ENCODE measurements at regions of chr10 and their contacts with region 1.

Region 1: DNA sequence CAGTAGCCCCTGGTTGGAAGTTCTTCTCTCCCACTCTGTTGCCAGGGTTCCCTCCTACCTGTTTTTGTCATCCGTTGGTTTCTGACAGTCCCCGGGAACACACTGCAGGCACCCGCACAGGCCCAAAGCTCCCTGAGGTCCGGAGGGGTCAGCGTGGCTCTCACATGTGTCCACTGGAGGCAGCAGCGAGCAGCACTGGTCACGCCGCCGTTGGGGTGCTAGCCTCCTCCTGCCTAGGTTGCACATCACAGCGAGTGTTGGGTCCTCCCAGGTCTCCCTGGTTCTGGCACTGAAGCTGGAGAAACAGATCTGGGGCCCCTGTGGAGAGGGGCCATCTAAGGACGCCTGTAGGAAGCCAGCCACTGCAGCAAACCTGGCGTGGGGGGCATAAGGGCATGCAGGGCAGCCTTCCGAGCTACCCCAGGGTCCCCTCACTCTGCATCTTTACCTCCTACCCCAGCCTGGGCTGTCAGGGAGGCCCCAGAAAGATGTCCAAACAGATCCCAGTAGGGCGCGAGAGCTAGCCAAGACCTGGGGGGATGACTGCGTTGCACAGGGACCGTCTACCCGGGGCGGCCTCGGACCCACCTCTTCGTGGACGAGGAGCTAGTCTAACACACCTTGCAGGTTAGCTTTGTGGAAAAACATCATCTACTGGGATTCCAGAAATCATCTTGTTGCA is 28.9 kb downstream of the LRRC27 start:
- DNase-seq: peak; percentile 26
- H3K27ac ChIP-seq: no peak overlapping the region
- CTCF ChIP-seq: peak; percentile 67

Region 2: DNA sequence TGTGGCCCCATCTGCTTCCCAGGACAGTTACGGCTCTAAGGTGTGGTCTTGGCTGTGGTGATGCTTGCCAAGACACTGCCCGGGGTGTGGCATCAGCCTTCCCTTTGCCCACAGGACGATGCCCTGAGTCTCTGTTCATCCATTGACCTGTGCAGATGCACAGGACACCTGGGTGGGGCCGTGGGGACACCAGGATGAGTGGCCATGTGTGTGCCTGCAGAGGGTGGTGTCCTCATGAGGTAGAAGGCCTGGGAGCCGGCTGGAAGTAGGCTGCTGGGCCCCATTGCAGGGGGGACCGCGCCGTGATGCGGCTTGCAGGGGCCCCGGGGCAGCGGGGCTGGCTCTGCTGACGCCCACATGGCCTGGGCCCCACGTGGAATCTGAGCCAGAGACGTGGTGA is 13.7 kb after region 1 on chr10:
- CTCF ChIA-PET with region 1: interaction called, 10 read pairs
- POLR2A ChIA-PET with region 1: no interaction called
- DNase-seq: no peak
- H3K27ac ChIP-seq: no peak overlapping the region
- CTCF ChIP-seq: no peak

Region 3: GRCh38 chr10:132399107-132400012 is 38.5 kb after region 1 on chr10:
- CTCF ChIA-PET with region 1: no interaction called
- POLR2A ChIA-PET with region 1: no interaction called
- DNase-seq: no peak
- H3K27ac ChIP-seq: peak overlapping the region; percentile 81
- CTCF ChIP-seq: no peak

Measured in RWPE1 (cell line).